Activated CD8-positive, alpha-beta T cell treated with anti-CD3 and anti-CD28 coated beads, Interleukin-2, amount 10 ng/mL, durations not matched to agents 7 days and 5 days (primary cell): ENCODE measurements at regions of chr9 and their contacts with region 1.

Region 1: DNA sequence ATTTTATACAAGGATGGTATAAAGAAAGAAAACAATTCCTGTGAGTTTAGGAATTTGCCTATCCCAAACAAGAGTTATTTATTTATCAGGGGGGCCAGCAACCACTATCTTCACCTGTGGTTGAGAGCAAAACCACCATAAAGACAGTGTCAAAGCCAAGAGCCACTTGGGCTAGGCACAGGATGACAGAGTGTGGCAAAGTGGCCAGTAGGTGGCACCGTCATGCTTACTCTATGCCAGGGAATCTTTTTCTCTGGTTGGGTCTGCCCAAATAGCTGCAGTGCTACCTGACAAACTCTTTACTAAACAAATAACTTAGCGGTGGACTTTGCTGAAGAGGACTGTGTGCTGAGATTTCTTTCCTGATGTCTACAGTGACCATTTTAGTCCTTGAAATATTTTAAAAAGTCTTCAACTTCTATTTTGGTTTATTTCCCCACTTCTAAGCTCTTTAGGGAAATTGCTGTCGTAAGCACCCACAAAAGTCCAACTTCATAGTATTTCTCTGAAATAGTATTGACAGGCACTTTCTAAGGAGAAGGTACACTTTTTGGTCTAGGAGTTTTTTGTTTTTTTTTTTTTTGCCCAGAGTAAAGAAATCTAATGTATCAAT is 285.0 kb downstream of the RFX3 start:
- DNase-seq: peak; percentile 77
- ATAC-seq: peak; percentile 97
- H3K4me3 Mint-ChIP-seq: no peak overlapping the region
- H3K27ac Mint-ChIP-seq: no peak overlapping the region
- H3K4me1 Mint-ChIP-seq: peaks cover 9% of the 10 kb centered on the region
- H3K27me3 Mint-ChIP-seq: no peaks in the 10 kb centered on the region

Region 2: GRCh38 chr9:3099646-3100045 is 141.1 kb before region 1 on chr9:
- CTCF ChIA-PET with region 1: no interaction called
- POLR2A ChIA-PET with region 1: no interaction called
- DNase-seq: no peak
- ATAC-seq: no peak
- H3K4me3 Mint-ChIP-seq: no peak overlapping the region
- H3K27ac Mint-ChIP-seq: no peak overlapping the region
- H3K4me1 Mint-ChIP-seq: no peaks in the 10 kb centered on the region
- H3K27me3 Mint-ChIP-seq: no peaks in the 10 kb centered on the region

Region 3: DNA sequence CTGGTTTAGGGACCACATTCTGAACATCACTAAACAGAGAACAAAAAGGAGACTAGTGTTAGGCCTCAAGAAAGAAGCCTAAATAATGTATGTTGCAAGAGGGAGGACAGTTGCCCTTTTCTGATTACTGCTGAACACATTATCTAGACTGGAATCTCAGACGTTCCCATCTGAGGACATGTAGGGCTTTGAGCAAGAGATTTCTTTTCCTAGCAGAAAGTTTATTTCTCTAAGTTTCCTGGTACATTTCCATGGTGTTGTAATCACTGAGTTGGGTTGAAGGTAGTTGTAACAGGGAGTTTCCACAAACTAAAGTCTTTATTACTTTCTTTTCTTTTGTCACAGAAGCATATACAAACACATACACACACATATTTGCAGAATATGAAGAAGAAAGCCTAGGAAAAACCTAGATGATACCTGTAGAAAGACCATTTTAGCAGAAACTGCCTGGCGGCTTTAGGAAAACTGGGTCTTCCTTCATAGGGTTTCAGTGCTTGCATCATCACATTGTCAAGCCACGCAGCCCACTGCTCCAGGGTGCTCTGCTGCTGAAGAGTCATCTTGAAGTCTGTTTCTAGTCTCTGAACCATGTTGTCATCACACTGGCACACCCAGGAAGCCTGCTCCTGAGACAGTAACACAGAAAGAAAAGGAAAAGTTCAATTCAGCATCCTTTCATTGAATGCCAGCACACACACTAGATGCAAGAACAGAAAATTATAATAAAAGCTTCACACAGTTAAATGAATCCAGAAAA is 16.0 kb after region 1 on chr9:
- CTCF ChIA-PET with region 1: interaction called, 10 read pairs
- POLR2A ChIA-PET with region 1: no interaction called
- DNase-seq: no peak
- ATAC-seq: no peak
- H3K4me3 Mint-ChIP-seq: no peak overlapping the region
- H3K27ac Mint-ChIP-seq: no peak overlapping the region
- H3K4me1 Mint-ChIP-seq: no peaks in the 10 kb centered on the region
- H3K27me3 Mint-ChIP-seq: no peaks in the 10 kb centered on the region